ENCODE measurements at regions of chr16 and their contacts with region 1.

Region 1: DNA sequence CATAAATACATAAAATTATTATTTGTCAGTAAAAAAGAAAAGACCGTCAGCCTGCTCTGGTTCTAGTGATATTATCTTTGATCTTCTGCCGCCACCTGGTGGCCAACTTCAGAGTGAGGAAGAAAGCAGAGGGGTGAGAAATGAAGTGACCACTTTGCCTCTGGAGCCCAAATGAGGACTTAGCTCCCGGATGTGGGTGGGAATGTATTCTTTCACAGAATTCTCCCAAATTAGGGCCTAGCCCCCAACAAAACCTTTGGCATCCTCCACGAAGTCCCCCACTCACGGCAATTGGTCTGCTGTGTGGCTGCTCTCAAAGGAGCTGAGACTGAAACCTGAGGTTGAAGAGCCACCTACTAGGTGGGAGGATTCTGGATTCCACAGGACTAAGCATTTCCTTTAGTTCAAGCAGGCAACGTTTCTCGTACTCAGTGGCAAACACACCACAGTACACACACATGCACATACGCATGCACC is 4.9 kb upstream of the ZNF267 start:
- H3K4me3 Mint-ChIP-seq: peak overlapping the region; percentile 54
- H3K27ac Mint-ChIP-seq: peak overlapping the region; percentile 94
- H3K4me1 Mint-ChIP-seq: peaks cover 42% of the 10 kb centered on the region
- H3K27me3 Mint-ChIP-seq: peaks cover 5% of the 10 kb centered on the region

Region 2: DNA sequence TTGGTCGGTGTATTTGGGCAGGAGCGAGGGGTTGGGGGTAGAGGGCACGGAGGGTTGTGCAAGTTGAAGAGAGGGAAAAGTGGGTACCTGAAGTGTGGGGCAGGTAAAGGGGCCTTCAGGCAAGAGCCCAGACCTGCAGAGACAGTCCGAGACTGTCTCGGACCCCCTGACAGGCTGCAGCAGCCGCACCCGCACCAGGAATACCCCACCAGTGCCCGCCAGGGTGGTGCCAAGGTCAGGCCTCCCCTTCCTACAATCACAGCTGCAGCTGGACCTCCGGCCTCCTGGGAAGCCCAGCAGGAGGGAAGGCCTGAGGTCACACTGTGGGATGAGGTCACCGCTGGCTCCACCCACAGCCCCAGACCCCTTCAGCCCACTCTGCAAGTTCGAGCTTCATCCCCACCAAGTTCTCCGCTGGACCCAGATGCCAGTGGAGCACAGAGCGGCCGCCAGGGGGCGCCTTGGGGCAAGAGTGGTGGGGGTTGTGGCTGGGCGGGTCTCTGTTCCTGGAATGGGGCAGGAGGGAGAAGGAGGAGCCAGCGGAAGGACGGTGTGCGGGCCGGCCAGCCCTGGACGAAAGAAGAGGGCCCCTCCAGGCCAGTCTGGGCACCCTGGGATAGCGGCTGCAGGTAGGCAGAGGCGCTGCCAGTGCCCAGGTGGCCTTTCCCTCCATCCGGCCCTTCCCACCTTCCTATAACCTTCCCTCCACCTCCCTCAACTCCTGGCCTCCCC is 883.9 kb before region 1 on chr16 and contains the start of gene HSD3B7:
- intact Hi-C with region 1: loop called (anchors 2 kb)
- H3K4me3 Mint-ChIP-seq: peak within 1 kb of the TSS; percentile 86
- H3K27ac Mint-ChIP-seq: peak within 1 kb of the TSS; percentile 88
- H3K4me1 Mint-ChIP-seq: peaks cover 41% of the 10 kb centered on the region
- H3K27me3 Mint-ChIP-seq: no peaks in the 10 kb centered on the region

Region 3: DNA sequence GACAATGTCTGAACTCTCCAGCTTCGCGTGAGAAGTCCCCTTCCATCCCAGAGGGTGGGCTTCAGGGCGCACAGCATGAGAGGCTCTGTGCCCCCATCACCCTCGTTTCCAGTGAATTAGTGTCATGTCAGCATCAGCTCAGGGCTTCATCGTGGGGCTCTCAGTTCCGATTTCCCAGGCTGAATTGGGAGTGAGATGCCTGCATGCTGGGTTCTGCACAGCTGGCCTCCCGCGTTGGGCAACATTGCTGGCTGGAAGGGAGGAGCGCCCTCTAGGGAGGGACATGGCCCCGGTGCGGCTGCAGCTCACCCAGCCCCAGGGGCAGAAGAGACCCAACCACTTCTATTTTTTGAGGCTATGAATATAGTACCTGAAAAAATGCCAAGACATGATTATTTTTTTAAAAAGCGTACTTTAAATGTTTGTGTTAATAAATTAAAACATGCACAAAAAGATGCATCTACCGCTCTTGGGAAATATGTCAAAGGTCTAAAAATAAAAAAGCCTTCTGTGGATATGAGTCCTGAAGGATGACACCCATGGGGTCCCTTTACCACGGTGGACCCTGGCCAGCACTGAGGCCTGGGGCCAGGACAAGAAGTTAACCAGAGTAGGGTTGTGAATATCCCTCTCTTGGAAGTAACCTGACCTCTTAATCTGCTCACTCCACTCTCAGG is 486.1 kb before region 1 on chr16:
- intact Hi-C with region 1: loop called (anchors 10 kb)
- H3K4me3 Mint-ChIP-seq: no peak overlapping the region
- H3K27ac Mint-ChIP-seq: peak overlapping the region; percentile 58
- H3K4me1 Mint-ChIP-seq: peaks cover 50% of the 10 kb centered on the region
- H3K27me3 Mint-ChIP-seq: no peaks in the 10 kb centered on the region

Region 4: DNA sequence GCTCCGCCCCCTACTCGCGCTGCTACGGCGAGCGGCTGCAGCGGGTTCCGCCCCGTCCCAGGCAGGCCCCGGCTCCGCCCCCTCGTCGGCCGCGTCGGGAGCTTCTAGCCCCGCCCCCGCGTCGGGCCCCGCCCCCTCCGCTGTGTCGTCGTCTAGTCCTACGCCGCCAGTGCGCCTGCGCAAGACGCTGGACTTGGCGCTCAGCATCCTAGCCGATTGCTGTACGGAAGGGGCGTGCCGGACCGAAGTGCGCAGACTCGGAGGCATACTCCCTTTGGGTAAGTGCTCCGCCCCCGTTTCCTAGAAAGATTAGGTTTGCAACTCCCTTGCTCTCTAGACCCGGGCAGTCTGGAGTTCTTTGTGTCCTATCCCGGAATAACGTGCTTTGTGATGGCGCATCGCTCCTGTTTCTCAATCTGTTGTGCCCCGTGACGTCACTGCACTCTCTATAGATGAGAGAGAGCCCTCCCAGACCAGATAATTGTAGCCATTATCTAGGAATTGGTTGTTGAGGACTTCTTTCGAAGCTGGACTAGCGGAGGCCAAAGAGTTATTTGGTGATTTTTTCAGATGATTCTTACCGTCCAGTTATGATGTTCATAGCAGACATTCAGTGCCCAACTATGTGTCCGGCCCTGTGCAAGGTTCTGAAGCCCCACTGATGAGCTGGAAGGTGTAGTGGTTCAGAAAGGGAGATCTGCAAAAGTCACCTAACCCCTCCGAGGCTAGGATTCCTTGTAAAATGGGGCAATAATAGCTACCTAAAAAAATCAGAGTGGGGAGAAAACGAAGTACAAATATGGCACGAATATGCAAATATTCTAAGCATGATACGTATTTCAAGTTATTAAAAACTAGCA is 408.8 kb before region 1 on chr16:
- intact Hi-C with region 1: loop called (anchors 10 kb)
- H3K4me3 Mint-ChIP-seq: peak overlapping the region; percentile 89
- H3K27ac Mint-ChIP-seq: peak overlapping the region; percentile 99
- H3K4me1 Mint-ChIP-seq: peaks cover 49% of the 10 kb centered on the region
- H3K27me3 Mint-ChIP-seq: no peaks in the 10 kb centered on the region

Region 5: GRCh38 chr16:31568577-31569359 is 300.0 kb before region 1 on chr16:
- intact Hi-C with region 1: no loop called
- H3K4me3 Mint-ChIP-seq: peak overlapping the region; percentile 67
- H3K27ac Mint-ChIP-seq: no peak overlapping the region
- H3K4me1 Mint-ChIP-seq: peaks cover 11% of the 10 kb centered on the region
- H3K27me3 Mint-ChIP-seq: peaks cover 38% of the 10 kb centered on the region

Region 6: DNA sequence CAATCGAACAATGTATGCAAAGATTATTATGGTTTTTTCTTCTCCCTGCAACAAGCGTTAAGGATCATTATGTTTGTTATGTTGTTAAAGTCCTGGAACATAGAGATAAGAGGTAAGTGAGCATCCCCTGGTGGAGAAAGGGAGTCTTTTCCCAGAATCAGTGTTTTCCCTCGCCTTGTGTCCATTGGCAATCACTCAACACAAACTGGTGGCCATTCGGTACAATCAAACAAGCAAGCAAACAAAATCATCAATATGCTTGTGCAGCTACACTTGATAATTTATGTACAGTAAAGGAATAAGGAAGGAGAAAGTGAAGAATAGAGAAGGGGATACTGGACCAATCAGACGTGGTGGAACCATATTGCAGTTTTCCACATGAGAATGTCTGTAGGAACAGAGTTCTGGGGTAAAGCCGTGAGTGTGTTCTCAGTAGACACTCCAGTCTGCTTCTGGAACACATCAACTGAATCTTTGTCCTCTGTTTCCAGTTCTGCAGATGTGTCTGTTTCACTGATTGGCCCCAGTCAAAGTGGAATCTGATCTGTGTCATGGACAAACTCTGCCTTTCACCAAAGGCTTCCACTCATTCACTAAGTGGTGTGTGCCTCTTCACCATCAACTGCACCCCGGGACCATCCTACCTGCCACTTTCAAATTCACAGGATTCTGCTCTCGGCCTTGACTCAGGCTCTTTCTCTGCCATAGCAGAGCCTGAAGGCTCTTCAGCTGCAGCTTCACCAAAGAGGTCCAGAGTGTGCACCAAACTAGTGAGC is 171.6 kb before region 1 on chr16:
- intact Hi-C with region 1: loop called (anchors 5 kb)
- H3K4me3 Mint-ChIP-seq: no peak overlapping the region
- H3K27ac Mint-ChIP-seq: no peak overlapping the region
- H3K4me1 Mint-ChIP-seq: peaks cover 23% of the 10 kb centered on the region
- H3K27me3 Mint-ChIP-seq: peaks cover 40% of the 10 kb centered on the region

Region 7: DNA sequence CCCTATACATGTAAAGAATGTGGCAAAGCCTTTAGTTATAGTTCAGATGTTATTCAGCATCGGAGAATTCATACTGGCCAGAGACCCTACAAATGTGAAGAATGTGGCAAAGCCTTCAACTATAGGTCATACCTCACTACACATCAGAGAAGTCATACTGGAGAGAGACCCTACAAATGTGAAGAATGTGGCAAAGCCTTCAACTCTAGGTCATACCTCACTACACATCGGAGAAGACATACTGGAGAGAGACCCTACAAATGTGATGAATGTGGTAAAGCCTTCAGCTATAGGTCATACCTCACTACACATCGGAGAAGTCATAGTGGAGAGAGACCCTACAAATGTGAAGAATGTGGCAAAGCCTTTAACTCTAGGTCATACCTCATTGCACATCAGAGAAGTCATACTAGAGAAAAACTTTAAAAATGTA is 47.3 kb after region 1 on chr16:
- intact Hi-C with region 1: no loop called
- H3K4me3 Mint-ChIP-seq: no peak overlapping the region
- H3K27ac Mint-ChIP-seq: no peak overlapping the region
- H3K4me1 Mint-ChIP-seq: no peaks in the 10 kb centered on the region
- H3K27me3 Mint-ChIP-seq: no peaks in the 10 kb centered on the region